K562 (cell line): ENCODE measurements at regions of chr7 and their contacts with region 1.

Region 1: GRCh38 chr7:123635551-123636359 is 19.9 kb upstream of the LMOD2 start:
- DNase-seq: peak; percentile 40 to 54 (median 47)
- ATAC-seq: peak; percentile 89
- H3K4me3 ChIP-seq: no peak overlapping the region
- H3K27ac ChIP-seq: no peak overlapping the region
- H3K4me1 ChIP-seq: no peaks in the 10 kb centered on the region
- H3K27me3 ChIP-seq: no peaks in the 10 kb centered on the region
- CTCF ChIP-seq: peak; percentile 63 to 93 (median 65); a peak in 5 of 6 replicates
- EP300 ChIP-seq: no peak
- POLR2A ChIP-seq: no peak
- RAD21 ChIP-seq: peak; percentile 97 to 98

Region 2: GRCh38 chr7:123682690-123683089 is 46.9 kb after region 1 on chr7:
- CTCF ChIA-PET with region 1: interaction called, 12 read pairs
- POLR2A ChIA-PET with region 1: no interaction called
- in situ Hi-C with region 1: no loop called
- intact Hi-C with region 1: no loop called
- DNase-seq: peak; percentile 32 to 70 (median 41)
- ATAC-seq: peak; percentile 79
- H3K4me3 ChIP-seq: no peak overlapping the region
- H3K27ac ChIP-seq: no peak overlapping the region
- H3K4me1 ChIP-seq: no peaks in the 10 kb centered on the region
- H3K27me3 ChIP-seq: no peaks in the 10 kb centered on the region
- CTCF ChIP-seq: peak; percentile 54 to 82 (median 59); a peak in 5 of 6 replicates
- EP300 ChIP-seq: no peak
- POLR2A ChIP-seq: no peak
- RAD21 ChIP-seq: peak; percentile 87 to 92

Region 3: GRCh38 chr7:123748734-123749536 is 113.2 kb after region 1 on chr7 and contains the start of gene WASL:
- CTCF ChIA-PET with region 1: no interaction called
- POLR2A ChIA-PET with region 1: no interaction called
- in situ Hi-C with region 1: no loop called
- intact Hi-C with region 1: loop called (anchors 2 kb)
- DNase-seq: peak; percentile 96 to 99 (median 96)
- ATAC-seq: peak; percentile 75
- H3K4me3 ChIP-seq: peak within 1 kb of the TSS; percentile 77
- H3K27ac ChIP-seq: peak within 1 kb of the TSS; percentile 94
- H3K4me1 ChIP-seq: peaks cover 16 to 20% of the 10 kb centered on the region in 2 experiments; a peak in 4 of 5 replicates
- H3K27me3 ChIP-seq: no peaks in the 10 kb centered on the region
- CTCF ChIP-seq: no peak; a peak in 1 of 6 replicates
- EP300 ChIP-seq: peak; percentile 69; the same call in 1 of the 2 replicates
- POLR2A ChIP-seq: peak; percentile 98
- RAD21 ChIP-seq: peak in 1 of 2 experiments; percentile 25; a peak in 1 of 4 replicates
- polyA plus RNA-seq, gene WASL: 3.2 to 4.4 TPM

Region 4: DNA sequence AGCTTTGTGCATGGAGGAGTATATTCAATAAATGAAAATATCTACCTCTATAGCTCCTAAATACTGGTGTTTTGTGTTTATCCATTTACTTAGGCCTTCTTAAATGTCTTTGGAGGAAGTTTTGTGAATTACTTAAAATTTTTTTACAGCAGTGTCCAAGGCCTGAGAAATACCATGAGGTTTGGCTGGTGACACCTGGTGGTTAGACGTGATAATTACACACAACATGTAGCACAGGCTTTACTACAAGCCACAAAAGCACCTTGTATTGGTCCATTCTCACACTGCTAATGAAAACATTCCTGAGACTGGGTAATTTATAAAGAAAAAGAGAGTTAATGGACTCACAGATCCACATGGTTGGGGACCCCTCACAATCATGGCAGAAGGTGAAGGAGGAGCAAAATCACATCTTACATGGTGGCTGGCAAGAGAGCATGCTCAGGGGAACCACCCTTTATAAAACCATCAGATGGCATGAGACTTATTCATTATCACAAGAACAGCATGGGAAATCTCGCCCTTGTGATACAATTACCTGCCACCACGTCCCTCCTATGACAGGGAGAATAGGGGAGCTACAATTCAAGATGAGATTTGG is 229.9 kb after region 1 on chr7:
- CTCF ChIA-PET with region 1: interaction called, 27 read pairs
- POLR2A ChIA-PET with region 1: no interaction called
- in situ Hi-C with region 1: no loop called
- intact Hi-C with region 1: loop called (anchors 1 kb)
- DNase-seq: peak; percentile 42 to 80 (median 68)
- ATAC-seq: peak; percentile 96
- H3K4me3 ChIP-seq: no peak overlapping the region
- H3K27ac ChIP-seq: no peak overlapping the region
- H3K4me1 ChIP-seq: no peaks in the 10 kb centered on the region
- H3K27me3 ChIP-seq: 0 out of 5 replicates have a peak, but pooled peaks cover 0 to 5% of the 10 kb centered on the region in 2 experiments
- CTCF ChIP-seq: peak; percentile 65 to 84 (median 72)
- EP300 ChIP-seq: no peak
- POLR2A ChIP-seq: no peak
- RAD21 ChIP-seq: peak; percentile 92 to 93

Region 5: GRCh38 chr7:123901044-123901443 is 265.3 kb after region 1 on chr7:
- CTCF ChIA-PET with region 1: no interaction called
- POLR2A ChIA-PET with region 1: no interaction called
- in situ Hi-C with region 1: no loop called
- intact Hi-C with region 1: no loop called
- DNase-seq: no peak
- ATAC-seq: no peak
- H3K4me3 ChIP-seq: no peak overlapping the region
- H3K27ac ChIP-seq: no peak overlapping the region
- H3K4me1 ChIP-seq: no peaks in the 10 kb centered on the region
- H3K27me3 ChIP-seq: no peaks in the 10 kb centered on the region
- CTCF ChIP-seq: no peak
- EP300 ChIP-seq: no peak
- POLR2A ChIP-seq: no peak
- RAD21 ChIP-seq: no peak

Region 6: GRCh38 chr7:123929107-123929506 is 293.4 kb after region 1 on chr7:
- CTCF ChIA-PET with region 1: no interaction called
- POLR2A ChIA-PET with region 1: no interaction called
- in situ Hi-C with region 1: no loop called
- intact Hi-C with region 1: no loop called
- DNase-seq: no peak
- ATAC-seq: no peak
- H3K4me3 ChIP-seq: no peak overlapping the region
- H3K27ac ChIP-seq: no peak overlapping the region
- H3K4me1 ChIP-seq: no peaks in the 10 kb centered on the region
- H3K27me3 ChIP-seq: no peaks in the 10 kb centered on the region
- CTCF ChIP-seq: no peak
- EP300 ChIP-seq: no peak
- POLR2A ChIP-seq: no peak
- RAD21 ChIP-seq: no peak

Region 7: GRCh38 chr7:124784879-124785818 is 1149.4 kb after region 1 on chr7:
- CTCF ChIA-PET with region 1: no interaction called
- POLR2A ChIA-PET with region 1: no interaction called
- in situ Hi-C with region 1: no loop called
- intact Hi-C with region 1: loop called (anchors 5 kb)
- DNase-seq: peak; percentile 57 to 70 (median 60)
- ATAC-seq: peak; percentile 90
- H3K4me3 ChIP-seq: no peak overlapping the region
- H3K27ac ChIP-seq: no peak overlapping the region
- H3K4me1 ChIP-seq: no peaks in the 10 kb centered on the region; a peak in 1 of 5 replicates
- H3K27me3 ChIP-seq: no peaks in the 10 kb centered on the region; a peak in 1 of 5 replicates
- CTCF ChIP-seq: peak; percentile 75 to 87 (median 85)
- EP300 ChIP-seq: no peak
- POLR2A ChIP-seq: no peak
- RAD21 ChIP-seq: peak; percentile 94 to 95